ENCODE measurements at regions of chr14 and their contacts with region 1.

Region 1: DNA sequence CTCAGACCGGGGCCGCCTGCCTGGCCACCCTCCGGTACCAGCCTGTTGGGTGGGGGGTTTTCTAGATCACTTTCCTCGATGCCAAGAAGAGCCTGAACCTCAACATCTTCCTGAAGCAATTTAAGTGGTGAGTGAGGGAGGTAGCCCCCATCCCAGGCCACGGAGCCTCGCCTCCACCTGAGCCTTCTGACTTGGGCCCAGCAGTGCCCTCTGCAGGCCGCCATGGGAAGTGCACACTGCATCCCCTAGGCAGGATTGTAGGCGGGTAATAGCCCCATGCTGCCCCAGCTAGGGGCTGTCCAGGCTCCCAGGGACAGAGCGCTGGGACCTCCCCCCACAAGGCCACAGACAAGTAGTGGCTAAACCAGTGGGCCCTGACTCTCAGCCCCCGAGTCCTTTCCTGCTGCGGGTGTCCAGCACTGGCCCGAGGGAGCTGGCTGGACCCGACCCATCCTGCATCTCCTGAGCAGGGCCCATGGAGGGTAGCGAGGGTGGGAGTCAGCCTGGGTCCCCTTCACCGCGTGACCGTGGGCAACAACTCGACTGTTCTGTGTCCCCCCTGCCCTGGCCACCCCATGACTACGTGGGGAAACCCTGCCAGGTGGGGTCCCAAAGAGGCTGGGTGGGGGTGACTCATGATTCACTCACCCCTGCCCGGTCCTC is 15.3 kb upstream of the ADSS1 start:
- DNase-seq: peak; percentile 90
- ATAC-seq: peak; percentile 91
- H3K4me3 Mint-ChIP-seq: no peak overlapping the region
- H3K27ac Mint-ChIP-seq: no peak overlapping the region
- H3K4me1 Mint-ChIP-seq: peaks cover 3% of the 10 kb centered on the region; the same call in 1 of the 2 replicates
- H3K27me3 Mint-ChIP-seq: no peaks in the 10 kb centered on the region
- CTCF ChIP-seq: peak; percentile 98

Region 2: DNA sequence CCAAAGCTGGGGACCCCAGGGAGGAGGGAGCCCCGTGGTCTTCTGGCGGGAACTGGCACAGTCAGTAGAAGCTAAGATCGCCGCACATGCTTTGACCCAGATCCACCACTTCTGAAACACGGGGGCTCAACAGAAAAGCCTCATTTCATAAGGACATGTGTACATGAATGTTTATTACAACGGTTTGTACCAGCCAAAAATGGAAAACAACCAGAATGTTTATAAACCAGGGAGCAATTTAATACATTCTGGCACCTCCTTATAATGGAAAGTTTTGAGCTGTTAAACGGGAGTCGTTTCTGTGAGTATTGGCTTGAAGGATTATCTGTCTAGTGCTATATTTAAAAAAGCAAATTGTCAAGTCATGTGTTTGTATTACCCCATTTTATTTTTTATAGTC is 96.9 kb before region 1 on chr14:
- CTCF ChIA-PET with region 1: no interaction called
- POLR2A ChIA-PET with region 1: no interaction called
- DNase-seq: no peak
- ATAC-seq: no peak
- H3K4me3 Mint-ChIP-seq: no peak overlapping the region
- H3K27ac Mint-ChIP-seq: no peak overlapping the region
- H3K4me1 Mint-ChIP-seq: no peaks in the 10 kb centered on the region
- H3K27me3 Mint-ChIP-seq: peaks cover 14% of the 10 kb centered on the region
- CTCF ChIP-seq: no peak

Region 3: DNA sequence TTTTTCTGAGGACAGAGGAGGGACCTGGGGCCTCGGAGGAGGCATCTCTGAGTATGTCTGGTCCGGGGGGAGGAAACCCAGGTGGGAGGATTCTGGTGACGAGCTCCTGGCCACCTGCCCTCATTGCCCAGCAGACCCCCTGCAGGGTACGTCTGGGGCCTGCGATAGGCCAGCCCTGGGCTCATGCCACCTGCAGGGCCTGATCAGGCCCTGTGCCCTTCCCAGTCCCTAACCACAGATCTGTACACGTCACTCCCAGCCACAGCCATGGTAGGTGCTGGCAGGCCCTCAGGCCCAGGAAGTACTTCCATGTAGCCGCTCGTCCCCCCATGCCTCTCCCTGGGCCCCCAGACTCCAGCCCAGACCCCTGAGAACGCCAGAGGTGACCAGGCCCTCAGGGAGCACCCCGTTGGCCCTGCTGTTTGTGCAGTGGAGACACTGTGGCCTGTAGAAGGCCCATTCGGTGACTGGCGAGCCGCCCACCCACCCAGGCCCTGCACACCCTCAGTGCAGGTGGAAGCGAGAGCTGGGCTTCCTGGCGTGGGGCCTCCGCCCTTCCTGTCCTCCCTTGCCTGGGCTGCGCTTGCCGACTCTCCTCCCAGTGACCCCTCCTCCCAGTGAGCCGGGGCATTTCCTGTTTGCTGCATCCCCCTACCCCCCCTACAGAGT is 13.6 kb before region 1 on chr14:
- CTCF ChIA-PET with region 1: interaction called, 18 read pairs
- POLR2A ChIA-PET with region 1: no interaction called
- DNase-seq: no peak
- ATAC-seq: peak; percentile 11
- H3K4me3 Mint-ChIP-seq: no peak overlapping the region
- H3K27ac Mint-ChIP-seq: no peak overlapping the region
- H3K4me1 Mint-ChIP-seq: peaks cover 28% of the 10 kb centered on the region
- H3K27me3 Mint-ChIP-seq: no peaks in the 10 kb centered on the region
- CTCF ChIP-seq: no peak

Measured in WTC11 (cell line).